Activated B cell treated with CpG ODN at 0.5 μM for 24 hours (primary cell): ENCODE measurements at regions of chr10 and their contacts with region 1.

Region 1: DNA sequence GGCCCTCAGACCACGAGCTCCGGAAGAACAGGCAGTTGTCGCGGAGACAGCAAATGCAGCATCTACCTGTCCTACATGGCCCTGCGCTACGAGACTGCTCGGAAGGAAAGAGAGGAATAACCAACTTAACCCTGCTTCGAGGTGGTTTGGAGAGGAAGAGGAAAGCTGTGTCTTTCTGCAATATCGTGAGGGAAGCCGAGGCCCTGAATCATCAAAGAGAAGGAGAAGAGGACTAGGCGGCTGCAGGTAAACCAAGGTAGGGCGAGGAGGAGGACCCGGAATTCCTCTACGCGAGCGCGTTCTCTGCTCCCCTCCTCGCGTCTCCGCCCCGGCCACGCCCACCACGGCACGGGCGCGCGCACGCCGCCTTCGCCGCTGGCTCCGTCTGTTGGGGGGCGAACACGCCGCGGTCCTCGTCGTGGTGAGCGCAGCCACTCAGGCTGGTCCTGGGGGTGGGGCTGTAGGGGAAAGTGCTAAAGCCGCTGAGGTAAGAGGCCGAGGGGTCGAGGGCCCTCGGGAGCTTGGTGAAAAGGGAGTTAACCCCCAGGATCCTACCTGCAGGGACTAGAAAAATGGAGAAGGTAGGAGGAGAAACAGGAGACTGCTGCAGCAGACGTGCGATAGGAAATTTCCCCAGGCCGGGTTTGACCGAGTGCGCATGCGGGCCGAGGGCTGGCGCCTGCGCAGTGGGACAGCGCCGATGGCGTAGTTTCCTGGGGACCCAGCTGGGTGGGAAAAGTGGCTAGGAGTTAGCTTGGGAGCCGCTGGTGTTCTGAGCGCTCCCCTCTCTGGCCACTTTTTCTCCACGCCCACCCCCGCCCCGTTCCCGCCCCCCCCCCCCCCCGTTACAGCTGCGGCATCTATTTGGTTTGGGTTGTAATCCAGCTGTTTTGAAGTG is at the starts of genes ANAPC16 and ASCC1:
- DNase-seq: peak; percentile 98
- ATAC-seq: peak; percentile 83
- H3K4me3 Mint-ChIP-seq: peak within 1 kb of the TSS; percentile 96
- H3K27ac Mint-ChIP-seq: peak within 1 kb of the TSS; percentile 99
- H3K4me1 Mint-ChIP-seq: peaks cover 62% of the 10 kb centered on the region
- H3K27me3 Mint-ChIP-seq: no peaks in the 10 kb centered on the region
- CTCF ChIP-seq: no peak
- total RNA-seq, gene ANAPC16: 128 and 137 TPM in 2 replicates
- total RNA-seq, gene ASCC1: 42.6 and 42.9 TPM in 2 replicates

Region 2: GRCh38 chr10:71963756-71964668 is 251.9 kb before region 1 on chr10 and contains the start of gene CHST3:
- CTCF ChIA-PET with region 1: no interaction called
- POLR2A ChIA-PET with region 1: no interaction called
- intact Hi-C with region 1: no loop called
- DNase-seq: no peak
- ATAC-seq: no peak
- H3K4me3 Mint-ChIP-seq: peak within 1 kb of the TSS; percentile 28
- H3K27ac Mint-ChIP-seq: no peak within 1 kb of the TSS
- H3K4me1 Mint-ChIP-seq: peaks cover 9% of the 10 kb centered on the region
- H3K27me3 Mint-ChIP-seq: peaks cover 57% of the 10 kb centered on the region
- CTCF ChIP-seq: no peak
- total RNA-seq, gene CHST3: not detected in 2 replicates

Region 3: GRCh38 chr10:72048450-72049124 is 167.3 kb before region 1 on chr10:
- CTCF ChIA-PET with region 1: interaction called, 14 read pairs
- POLR2A ChIA-PET with region 1: interaction called, 9 read pairs
- intact Hi-C with region 1: no loop called
- DNase-seq: peak; percentile 74
- ATAC-seq: peak; percentile 99
- H3K4me3 Mint-ChIP-seq: no peak overlapping the region
- H3K27ac Mint-ChIP-seq: peak overlapping the region; percentile 41
- H3K4me1 Mint-ChIP-seq: peaks cover 19% of the 10 kb centered on the region
- H3K27me3 Mint-ChIP-seq: no peaks in the 10 kb centered on the region
- CTCF ChIP-seq: peak; percentile 40

Region 4: DNA sequence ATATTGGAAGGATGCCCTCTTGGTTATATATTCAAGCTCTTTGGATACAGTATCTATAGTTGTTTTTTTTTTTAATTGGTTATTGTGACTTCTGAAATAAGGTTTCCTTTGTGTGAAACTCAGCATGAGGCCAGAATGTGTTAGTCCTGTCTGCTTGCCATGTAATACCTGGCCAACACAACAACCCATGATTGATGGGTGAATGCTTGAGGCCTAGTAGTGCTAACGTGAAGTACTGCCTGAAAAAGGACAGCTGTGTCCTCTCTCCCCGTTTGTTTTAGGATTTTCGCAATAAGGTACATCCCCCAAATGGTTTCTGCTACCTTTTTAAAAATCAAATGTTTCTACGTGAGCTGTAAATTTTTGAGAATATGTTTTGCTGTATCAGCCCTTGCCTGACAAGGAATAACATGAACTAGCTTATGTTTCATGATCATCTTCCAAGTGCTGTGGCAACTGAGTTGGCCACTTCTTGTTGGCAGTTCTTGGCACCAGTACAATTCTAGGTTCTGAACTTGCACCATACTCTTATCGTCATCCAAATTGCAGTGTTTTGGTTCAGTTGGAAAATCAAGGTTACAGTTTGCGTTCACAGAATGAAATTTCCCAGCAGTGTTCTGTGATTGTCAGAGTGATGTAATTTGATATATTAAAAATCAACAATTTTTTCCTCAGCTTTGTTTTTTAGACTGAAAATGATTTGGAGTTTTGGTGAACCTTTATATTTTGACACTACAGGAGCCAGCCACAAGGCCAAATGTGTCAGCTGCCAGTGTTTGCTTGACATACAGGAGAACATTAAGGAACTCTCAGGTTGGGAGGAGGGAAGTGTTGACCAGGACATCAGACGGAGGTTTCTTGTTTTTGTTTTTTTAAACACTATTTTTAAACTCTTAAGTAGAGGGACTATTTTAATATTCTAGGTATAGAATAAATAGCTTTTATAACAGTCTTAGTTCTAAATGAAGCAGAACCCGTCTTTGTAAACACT is 13.7 kb after region 1 on chr10:
- CTCF ChIA-PET with region 1: no interaction called
- POLR2A ChIA-PET with region 1: interaction called, 15 read pairs
- intact Hi-C with region 1: no loop called
- DNase-seq: no peak
- ATAC-seq: no peak
- H3K4me3 Mint-ChIP-seq: no peak overlapping the region
- H3K27ac Mint-ChIP-seq: no peak overlapping the region
- H3K4me1 Mint-ChIP-seq: peaks cover 37% of the 10 kb centered on the region
- H3K27me3 Mint-ChIP-seq: no peaks in the 10 kb centered on the region
- CTCF ChIP-seq: no peak

Region 5: DNA sequence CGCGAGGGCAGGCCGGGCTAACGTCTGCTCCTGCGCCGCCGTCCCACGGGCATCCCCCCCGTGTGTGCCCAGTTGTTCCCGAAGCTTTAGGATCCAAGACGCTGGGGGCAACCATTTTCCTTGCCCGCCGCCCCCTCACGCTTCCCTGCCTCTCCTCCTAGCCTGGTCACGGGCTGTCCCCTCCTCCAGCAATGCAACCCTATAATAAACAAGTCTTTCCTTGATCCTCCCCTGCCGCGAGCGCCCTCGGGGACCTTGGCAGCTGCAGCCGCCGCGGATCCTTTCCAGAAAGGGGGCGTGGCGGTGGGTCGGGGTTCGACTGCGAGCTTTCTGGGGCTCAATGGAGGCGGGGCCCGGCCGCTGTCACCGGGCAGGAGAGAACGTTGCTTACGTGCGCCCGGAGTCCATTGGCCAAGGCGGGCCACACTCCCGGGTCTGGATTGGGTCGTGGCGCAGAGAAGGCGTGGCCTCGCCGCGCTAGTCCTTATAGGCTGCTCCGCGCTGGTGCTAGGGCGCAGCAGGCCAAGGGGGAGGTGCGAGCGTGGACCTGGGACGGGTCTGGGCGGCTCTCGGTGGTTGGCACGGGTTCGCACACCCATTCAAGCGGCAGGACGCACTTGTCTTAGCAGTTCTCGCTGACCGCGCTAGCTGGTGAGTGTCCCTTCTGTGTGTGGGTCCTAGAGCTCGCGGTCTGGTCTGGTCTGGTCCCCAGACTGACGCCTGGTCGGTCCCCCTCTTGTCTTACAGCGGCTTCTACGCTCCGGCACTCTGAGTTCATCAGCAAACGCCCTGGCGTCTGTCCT is 57.7 kb after region 1 on chr10 and contains the start of gene DDIT4:
- CTCF ChIA-PET with region 1: interaction called, 5 read pairs
- POLR2A ChIA-PET with region 1: interaction called, 172 read pairs
- intact Hi-C with region 1: loop called (anchors 1 kb)
- DNase-seq: peak; percentile 95
- ATAC-seq: peak; percentile 93
- H3K4me3 Mint-ChIP-seq: peak within 1 kb of the TSS; percentile 98
- H3K27ac Mint-ChIP-seq: peak within 1 kb of the TSS; percentile 94
- H3K4me1 Mint-ChIP-seq: peaks cover 40% of the 10 kb centered on the region
- H3K27me3 Mint-ChIP-seq: no peaks in the 10 kb centered on the region
- CTCF ChIP-seq: no peak
- total RNA-seq, gene DDIT4: 175 and 180 TPM in 2 replicates

Region 6: DNA sequence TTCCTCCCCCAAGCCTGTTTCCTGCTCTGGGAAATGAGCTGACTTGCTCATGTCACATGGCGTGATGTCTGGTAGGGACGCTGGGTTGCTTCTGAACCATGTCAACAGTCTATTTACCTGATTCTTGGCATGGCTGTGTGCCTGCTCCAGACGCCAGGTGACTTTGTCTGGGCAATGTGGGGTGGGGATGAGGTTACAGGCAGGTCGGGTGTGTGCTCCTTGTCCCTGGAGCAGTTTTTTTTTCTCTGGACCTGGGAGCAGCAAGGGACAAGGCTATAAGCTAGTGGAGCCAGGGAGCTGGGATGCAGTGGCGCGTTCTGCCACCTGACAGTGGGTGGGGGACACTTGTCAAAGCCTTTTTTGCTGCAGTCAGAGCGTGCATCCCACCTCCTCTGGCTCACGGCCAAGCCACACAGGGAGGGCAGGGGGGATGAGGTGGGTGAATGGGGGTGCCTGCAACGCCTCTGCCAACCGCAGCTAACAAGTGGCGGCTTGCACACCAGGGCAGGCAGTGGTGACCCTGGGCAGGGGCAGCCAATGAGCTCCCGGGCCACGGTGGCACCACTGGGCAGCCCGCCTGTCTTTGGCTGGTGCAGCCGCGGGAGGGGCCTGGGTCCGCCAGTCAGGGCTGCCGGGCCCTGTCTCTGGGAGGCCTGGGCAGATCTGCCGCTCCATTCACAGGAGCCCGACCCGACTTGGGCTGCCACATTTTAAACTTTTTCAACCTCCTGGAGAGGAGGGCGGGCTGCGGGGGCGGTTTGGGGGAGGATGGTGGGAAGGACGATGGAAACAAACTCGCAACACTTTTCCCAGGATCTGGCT is 115.9 kb after region 1 on chr10:
- CTCF ChIA-PET with region 1: interaction called, 15 read pairs
- POLR2A ChIA-PET with region 1: interaction called, 210 read pairs
- intact Hi-C with region 1: loop called (anchors 1 kb)
- DNase-seq: peak; percentile 81
- ATAC-seq: peak; percentile 82
- H3K4me3 Mint-ChIP-seq: peak overlapping the region; percentile 71
- H3K27ac Mint-ChIP-seq: peak overlapping the region; percentile 94
- H3K4me1 Mint-ChIP-seq: peaks cover 93% of the 10 kb centered on the region
- H3K27me3 Mint-ChIP-seq: no peaks in the 10 kb centered on the region
- CTCF ChIP-seq: no peak